Activated CD4-positive, alpha-beta memory T cell treated with anti-CD3 and anti-CD28 coated beads for 36 hours (primary cell): ENCODE measurements at regions of chr20 and their contacts with region 1.

Region 1: GRCh38 chr20:17968366-17969279 is at the starts of genes MGME1 and SNX5:
- DNase-seq: peak; percentile 100
- H3K4me3 Mint-ChIP-seq: peak within 1 kb of the TSS; percentile 96
- H3K27ac Mint-ChIP-seq: peak within 1 kb of the TSS; percentile 99
- H3K4me1 Mint-ChIP-seq: peaks cover 43% of the 10 kb centered on the region
- H3K27me3 Mint-ChIP-seq: no peaks in the 10 kb centered on the region
- total RNA-seq, gene MGME1: 31.0 to 34.7 TPM
- total RNA-seq, gene SNX5: 234 to 256 TPM

Region 2: DNA sequence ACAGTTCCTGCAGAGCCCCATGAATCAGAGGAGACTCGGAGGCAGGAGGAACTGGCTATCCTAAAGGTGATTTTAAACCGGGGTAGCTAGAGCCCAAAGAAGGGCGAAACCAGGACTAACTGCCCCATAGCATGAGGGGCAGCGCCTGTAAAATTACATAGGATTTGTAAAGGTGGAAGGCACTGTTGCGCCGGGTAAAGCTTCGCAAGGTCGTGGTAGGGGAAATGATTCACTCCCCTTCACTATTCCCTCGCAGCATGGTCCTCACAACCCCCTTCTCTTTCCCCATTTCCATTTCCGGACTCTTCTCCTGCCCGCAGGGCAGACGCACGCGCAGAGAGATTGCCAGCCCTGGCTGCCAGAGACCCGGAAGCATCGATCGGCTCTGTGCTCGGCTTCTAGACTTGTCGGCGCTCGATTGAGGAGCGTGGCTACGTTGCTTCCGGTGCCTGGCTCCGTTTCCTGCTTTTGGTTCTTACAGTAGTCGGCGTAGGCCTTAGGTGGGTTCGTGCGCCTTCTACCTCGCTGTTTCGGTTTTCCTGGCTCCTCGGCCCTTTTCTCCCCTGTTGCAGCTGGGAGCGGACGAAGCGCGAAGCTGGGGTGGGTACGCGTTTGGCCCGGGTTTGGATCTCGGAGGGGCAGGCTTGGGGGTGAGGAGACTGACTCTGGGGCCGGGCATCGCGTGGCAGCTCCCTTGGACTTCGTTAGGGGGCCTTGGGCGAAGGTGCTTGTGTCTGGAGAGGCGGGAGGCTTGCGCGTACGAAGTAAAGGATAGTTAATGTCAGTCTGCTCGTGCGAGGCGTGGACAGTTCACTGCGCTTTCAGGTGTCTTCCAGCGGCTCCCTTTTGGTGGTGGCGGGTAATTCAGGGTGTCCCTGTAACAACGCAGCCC is 1238.8 kb before region 1 on chr20 and contains the start of gene SNRPB2:
- CTCF ChIA-PET with region 1: no interaction called
- POLR2A ChIA-PET with region 1: no interaction called
- intact Hi-C with region 1: loop called (anchors 2 kb)
- DNase-seq: peak; percentile 95
- H3K4me3 Mint-ChIP-seq: peak within 1 kb of the TSS; percentile 100
- H3K27ac Mint-ChIP-seq: peak within 1 kb of the TSS; percentile 99
- H3K4me1 Mint-ChIP-seq: peaks cover 48% of the 10 kb centered on the region
- H3K27me3 Mint-ChIP-seq: peaks cover 13% of the 10 kb centered on the region
- total RNA-seq, gene SNRPB2: 109 to 110 TPM

Region 3: GRCh38 chr20:17682103-17682888 is 286.3 kb before region 1 on chr20 and contains the start of gene RRBP1:
- CTCF ChIA-PET with region 1: interaction called, 6 read pairs
- POLR2A ChIA-PET with region 1: interaction called, 6 read pairs
- intact Hi-C with region 1: loop called (anchors 1 kb)
- DNase-seq: peak; percentile 98
- H3K4me3 Mint-ChIP-seq: peak within 1 kb of the TSS; percentile 81
- H3K27ac Mint-ChIP-seq: peak within 1 kb of the TSS; percentile 79
- H3K4me1 Mint-ChIP-seq: peaks cover 18% of the 10 kb centered on the region
- H3K27me3 Mint-ChIP-seq: peaks cover 23% of the 10 kb centered on the region
- total RNA-seq, gene RRBP1: 29.6 to 32.0 TPM

Region 4: DNA sequence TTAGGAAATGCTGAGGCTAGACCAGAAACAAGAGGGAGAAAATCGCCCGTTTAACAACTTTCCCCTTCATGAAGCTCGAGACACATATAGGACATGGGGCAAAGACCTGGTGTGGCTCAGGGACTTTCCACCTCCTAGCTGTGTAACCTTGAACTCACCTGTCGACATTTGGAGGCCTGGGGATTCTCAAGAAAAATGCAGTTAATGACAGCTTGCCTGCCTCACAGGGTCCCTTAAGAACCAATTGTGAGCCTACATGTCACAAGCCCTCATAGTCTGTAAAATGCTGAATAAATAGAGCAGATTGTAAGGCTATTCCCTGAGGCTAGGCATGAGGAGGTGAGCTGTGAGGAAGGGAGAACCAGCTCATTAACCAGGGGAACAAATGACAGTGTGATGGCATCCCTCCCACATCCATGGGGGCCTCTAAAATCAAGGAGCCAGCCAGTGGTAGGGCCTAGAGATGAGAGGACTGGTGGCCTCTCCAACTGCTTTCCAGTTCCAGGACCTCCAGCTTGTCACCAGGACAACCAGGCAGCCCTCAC is 35.4 kb after region 1 on chr20:
- CTCF ChIA-PET with region 1: no interaction called
- POLR2A ChIA-PET with region 1: no interaction called
- intact Hi-C with region 1: no loop called
- DNase-seq: no peak
- H3K4me3 Mint-ChIP-seq: no peak overlapping the region
- H3K27ac Mint-ChIP-seq: no peak overlapping the region
- H3K4me1 Mint-ChIP-seq: no peaks in the 10 kb centered on the region
- H3K27me3 Mint-ChIP-seq: no peaks in the 10 kb centered on the region

Region 5: GRCh38 chr20:18066421-18067336 is 98.1 kb after region 1 on chr20:
- CTCF ChIA-PET with region 1: no interaction called
- POLR2A ChIA-PET with region 1: no interaction called
- intact Hi-C with region 1: no loop called
- DNase-seq: no peak
- H3K4me3 Mint-ChIP-seq: no peak overlapping the region
- H3K27ac Mint-ChIP-seq: no peak overlapping the region
- H3K4me1 Mint-ChIP-seq: no peaks in the 10 kb centered on the region
- H3K27me3 Mint-ChIP-seq: peaks cover 13% of the 10 kb centered on the region

Region 6: GRCh38 chr20:18137412-18138265 is 169.0 kb after region 1 on chr20 and contains the starts of genes KAT14 and PET117:
- CTCF ChIA-PET with region 1: no interaction called
- POLR2A ChIA-PET with region 1: no interaction called
- intact Hi-C with region 1: loop called (anchors 2 kb)
- DNase-seq: peak; percentile 93
- H3K4me3 Mint-ChIP-seq: peak within 1 kb of the TSS; percentile 65
- H3K27ac Mint-ChIP-seq: peak within 1 kb of the TSS; percentile 76
- H3K4me1 Mint-ChIP-seq: peaks cover 29% of the 10 kb centered on the region
- H3K27me3 Mint-ChIP-seq: no peaks in the 10 kb centered on the region
- total RNA-seq, gene KAT14: 14.2 to 14.4 TPM
- total RNA-seq, gene PET117: 15.2 to 15.9 TPM

Region 7: GRCh38 chr20:18363708-18364390 is 395.2 kb after region 1 on chr20:
- CTCF ChIA-PET with region 1: no interaction called
- POLR2A ChIA-PET with region 1: no interaction called
- intact Hi-C with region 1: no loop called
- DNase-seq: no peak
- H3K4me3 Mint-ChIP-seq: no peak overlapping the region
- H3K27ac Mint-ChIP-seq: no peak overlapping the region
- H3K4me1 Mint-ChIP-seq: no peaks in the 10 kb centered on the region
- H3K27me3 Mint-ChIP-seq: no peaks in the 10 kb centered on the region

Region 8: GRCh38 chr20:18507218-18508021 is 538.8 kb after region 1 on chr20 and contains the start of gene SEC23B:
- CTCF ChIA-PET with region 1: no interaction called
- POLR2A ChIA-PET with region 1: interaction called, 7 read pairs
- intact Hi-C with region 1: loop called (anchors 1 kb)
- DNase-seq: peak; percentile 99
- H3K4me3 Mint-ChIP-seq: peak within 1 kb of the TSS; percentile 96
- H3K27ac Mint-ChIP-seq: peak within 1 kb of the TSS; percentile 97
- H3K4me1 Mint-ChIP-seq: peaks cover 40% of the 10 kb centered on the region
- H3K27me3 Mint-ChIP-seq: no peaks in the 10 kb centered on the region
- total RNA-seq, gene SEC23B: 90.6 to 97.1 TPM